Activated CD4-positive, alpha-beta T cell treated with anti-CD3 and anti-CD28 coated beads, Interleukin-2, amount 10 ng/mL, durations not matched to agents 7 days and 5 days (primary cell): ENCODE measurements at regions of chr21 and their contacts with region 1.

Region 1: DNA sequence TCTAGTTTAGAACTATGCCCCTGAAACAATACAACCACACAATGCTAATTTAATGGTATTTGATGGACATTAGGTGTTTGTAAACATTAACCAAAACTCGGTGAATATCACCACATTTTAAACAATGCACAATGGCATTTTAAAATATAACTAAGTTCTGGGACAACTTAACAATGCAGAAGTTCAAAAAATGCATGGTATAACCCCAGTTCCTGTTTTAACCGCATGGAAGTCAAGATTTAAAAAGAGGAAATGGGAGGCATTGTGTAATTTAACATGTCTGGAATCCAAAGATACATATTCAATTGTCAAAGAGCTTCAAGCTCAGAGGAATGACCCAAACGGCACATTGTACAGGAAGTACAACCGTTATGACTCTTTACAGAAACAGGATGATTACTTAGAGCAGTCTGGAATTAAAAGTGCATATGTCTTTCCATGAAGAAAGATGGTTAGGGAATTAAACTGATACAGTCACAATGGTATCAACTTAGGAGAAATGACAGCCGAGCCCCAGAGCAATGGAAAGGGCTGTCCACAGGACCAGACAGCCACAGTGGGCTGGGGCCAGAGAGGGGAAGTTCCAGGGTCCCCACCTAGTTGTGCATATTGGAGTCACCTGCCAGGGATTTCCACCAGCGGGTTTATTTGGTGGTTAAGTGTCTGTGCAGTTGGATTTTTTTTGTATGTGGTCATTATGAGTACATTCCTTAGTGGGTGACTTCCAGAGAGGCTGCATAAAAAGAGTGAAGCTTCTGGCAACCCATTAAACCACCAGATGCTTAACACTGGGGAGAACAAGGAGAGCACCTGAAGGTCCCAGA is 7.5 kb upstream of the PTTG1IP start:
- DNase-seq: no peak
- H3K4me3 Mint-ChIP-seq: no peak overlapping the region
- H3K27ac Mint-ChIP-seq: peak overlapping the region; percentile 74
- H3K4me1 Mint-ChIP-seq: peaks cover 29% of the 10 kb centered on the region
- H3K27me3 Mint-ChIP-seq: peaks cover 3% of the 10 kb centered on the region

Region 2: GRCh38 chr21:44801468-44802395 is 79.2 kb before region 1 on chr21 and contains the start of gene UBE2G2:
- CTCF ChIA-PET with region 1: interaction called, 12 read pairs
- POLR2A ChIA-PET with region 1: no interaction called
- DNase-seq: peak; percentile 86
- H3K4me3 Mint-ChIP-seq: peak within 1 kb of the TSS; percentile 99
- H3K27ac Mint-ChIP-seq: peak within 1 kb of the TSS; percentile 96
- H3K4me1 Mint-ChIP-seq: peaks cover 45% of the 10 kb centered on the region
- H3K27me3 Mint-ChIP-seq: no peaks in the 10 kb centered on the region
- total RNA-seq, gene UBE2G2: 95.8 to 103 TPM

Region 3: DNA sequence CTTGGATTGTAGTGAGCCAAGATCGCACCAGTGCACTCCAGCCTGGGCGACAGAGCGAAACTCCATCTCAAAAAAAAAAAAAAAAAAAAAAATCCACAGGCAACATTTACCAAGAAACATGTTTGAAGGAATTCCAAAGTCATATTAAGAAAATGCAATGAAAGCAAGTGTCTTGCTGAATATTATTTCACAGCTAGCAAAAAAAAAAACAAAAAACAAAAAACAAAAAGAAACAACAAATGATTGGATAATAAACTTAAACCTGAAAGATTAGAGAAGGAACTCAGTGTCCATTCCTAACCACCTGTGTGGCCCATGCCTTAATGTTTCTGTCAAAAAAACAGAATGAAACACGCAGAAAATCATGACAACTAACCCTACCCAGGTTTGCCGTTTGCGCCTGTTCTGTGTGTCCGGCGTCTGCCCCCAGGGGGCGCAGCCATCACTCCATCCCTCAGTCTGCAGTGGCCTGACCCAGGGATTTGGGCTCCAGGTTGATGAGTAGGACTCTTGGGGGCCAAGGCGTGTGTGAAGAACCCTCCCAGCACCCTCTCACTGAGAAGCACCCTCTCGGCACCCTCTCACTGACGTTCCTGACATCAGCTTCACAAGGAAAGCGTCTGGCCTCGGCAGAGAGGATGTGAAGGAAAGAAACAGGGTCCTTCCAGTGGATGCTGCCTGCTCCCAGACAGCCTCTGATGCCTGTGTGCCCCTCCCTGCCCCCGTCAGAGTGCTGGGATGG is 11.7 kb after region 1 on chr21:
- CTCF ChIA-PET with region 1: interaction called, 17 read pairs
- POLR2A ChIA-PET with region 1: no interaction called
- DNase-seq: peak; percentile 80
- H3K4me3 Mint-ChIP-seq: no peak overlapping the region
- H3K27ac Mint-ChIP-seq: peak overlapping the region; percentile 46
- H3K4me1 Mint-ChIP-seq: peaks cover 14% of the 10 kb centered on the region
- H3K27me3 Mint-ChIP-seq: no peaks in the 10 kb centered on the region

Region 4: DNA sequence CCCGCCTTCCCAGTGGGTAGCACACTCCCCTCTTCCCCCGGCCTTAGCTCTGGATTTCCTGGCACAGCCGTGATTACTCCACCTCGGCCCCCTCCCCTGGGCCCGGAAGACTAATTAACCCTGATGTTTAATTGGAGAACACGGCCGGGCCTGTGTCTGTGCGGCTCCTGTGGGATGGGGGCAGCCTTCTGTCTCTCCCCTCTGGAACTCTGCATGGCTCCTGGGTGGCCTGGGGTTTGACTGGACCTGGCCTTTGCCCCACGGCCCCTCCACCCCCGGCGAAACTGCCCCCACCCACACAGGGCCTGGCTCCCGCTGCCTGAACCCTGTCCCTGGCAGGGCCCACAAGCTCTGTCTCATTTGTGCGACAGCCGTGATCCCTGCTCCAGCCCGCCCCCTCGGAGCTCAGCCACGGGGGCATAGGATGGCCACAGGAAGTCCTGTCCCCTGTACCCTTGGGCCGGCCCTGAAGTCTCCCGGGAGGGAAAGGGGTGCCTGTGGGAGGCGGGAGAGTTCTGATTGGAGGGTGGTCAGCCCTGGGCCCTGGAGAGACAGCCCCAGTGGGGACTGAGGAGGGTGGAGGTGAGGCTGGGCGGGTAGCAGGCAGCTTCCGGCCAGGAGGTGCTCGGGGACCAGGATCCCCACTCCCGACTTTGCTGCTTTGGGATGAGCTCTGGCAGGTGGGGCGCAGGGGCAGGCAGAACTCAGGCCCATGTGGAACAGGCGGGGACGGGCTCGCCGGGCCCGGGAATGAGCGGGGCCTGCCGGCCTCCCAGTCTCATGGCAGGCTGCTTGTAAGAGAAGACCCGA is 103.9 kb after region 1 on chr21:
- CTCF ChIA-PET with region 1: no interaction called
- POLR2A ChIA-PET with region 1: no interaction called
- DNase-seq: no peak
- H3K4me3 Mint-ChIP-seq: no peak overlapping the region
- H3K27ac Mint-ChIP-seq: no peak overlapping the region
- H3K4me1 Mint-ChIP-seq: no peaks in the 10 kb centered on the region
- H3K27me3 Mint-ChIP-seq: no peaks in the 10 kb centered on the region